ENCODE measurements at regions of chr3 and their contacts with region 1.

Region 1: GRCh38 chr3:64484289-64484992 is 203.4 kb downstream of the ADAMTS9 start:
- DNase-seq: peak; percentile 79 to 85
- H3K4me3 ChIP-seq: no peak overlapping the region
- H3K4me3 Mint-ChIP-seq: no peak overlapping the region
- H3K27ac Mint-ChIP-seq: no peak overlapping the region
- H3K4me1 ChIP-seq: peaks cover 6% of the 10 kb centered on the region; the same call in 1 of the 2 replicates
- H3K4me1 Mint-ChIP-seq: peaks cover 6% of the 10 kb centered on the region
- H3K27me3 ChIP-seq: no peaks in the 10 kb centered on the region
- H3K27me3 Mint-ChIP-seq: no peaks in the 10 kb centered on the region
- CTCF ChIP-seq: peak; percentile 83 to 88

Region 2: GRCh38 chr3:64023187-64023848 is 461.1 kb before region 1 on chr3 and contains the start of gene PSMD6:
- CTCF ChIA-PET with region 1: no interaction called
- POLR2A ChIA-PET with region 1: no interaction called
- intact Hi-C with region 1: loop called (anchors 2 kb)
- DNase-seq: peak; percentile 84 to 97
- H3K4me3 ChIP-seq: peak within 1 kb of the TSS; percentile 88
- H3K4me3 Mint-ChIP-seq: peak within 1 kb of the TSS; percentile 80
- H3K27ac Mint-ChIP-seq: peak within 1 kb of the TSS; percentile 57
- H3K4me1 ChIP-seq: peaks cover 4% of the 10 kb centered on the region; the same call in 1 of the 2 replicates
- H3K4me1 Mint-ChIP-seq: no peaks in the 10 kb centered on the region
- H3K27me3 ChIP-seq: no peaks in the 10 kb centered on the region
- H3K27me3 Mint-ChIP-seq: peaks cover 3% of the 10 kb centered on the region
- CTCF ChIP-seq: peak; percentile 98 to 100
- total RNA-seq, gene PSMD6: 96.6 and 100 TPM in 2 replicates

Region 3: GRCh38 chr3:64187065-64187959 is 297.1 kb before region 1 on chr3:
- CTCF ChIA-PET with region 1: no interaction called
- POLR2A ChIA-PET with region 1: no interaction called
- intact Hi-C with region 1: loop called (anchors 10 kb)
- DNase-seq: peak; percentile 23 to 46
- H3K4me3 ChIP-seq: no peak overlapping the region
- H3K4me3 Mint-ChIP-seq: no peak overlapping the region
- H3K27ac Mint-ChIP-seq: no peak overlapping the region
- H3K4me1 ChIP-seq: peaks cover 35% of the 10 kb centered on the region
- H3K4me1 Mint-ChIP-seq: peaks cover 11% of the 10 kb centered on the region
- H3K27me3 ChIP-seq: no peaks in the 10 kb centered on the region
- H3K27me3 Mint-ChIP-seq: no peaks in the 10 kb centered on the region
- CTCF ChIP-seq: no peak

Region 4: GRCh38 chr3:64445321-64446300 is 38.8 kb before region 1 on chr3:
- CTCF ChIA-PET with region 1: no interaction called
- POLR2A ChIA-PET with region 1: no interaction called
- intact Hi-C with region 1: no loop called
- DNase-seq: peak; percentile 60 to 62
- H3K4me3 ChIP-seq: peak overlapping the region; percentile 60
- H3K4me3 Mint-ChIP-seq: peak overlapping the region; percentile 75
- H3K27ac Mint-ChIP-seq: no peak overlapping the region
- H3K4me1 ChIP-seq: peaks cover 20% of the 10 kb centered on the region
- H3K4me1 Mint-ChIP-seq: peaks cover 14% of the 10 kb centered on the region
- H3K27me3 ChIP-seq: no peaks in the 10 kb centered on the region; the same call in 1 of the 2 replicates
- H3K27me3 Mint-ChIP-seq: peaks cover 4% of the 10 kb centered on the region
- CTCF ChIP-seq: no peak

Measured in Caco-2 (cell line).